B cell (primary cell): ENCODE measurements at regions of chr10 and their contacts with region 1.

Region 1: GRCh38 chr10:96395931-96396877 is 37.4 kb upstream of the OPALIN start:
- DNase-seq: peak; percentile 78
- ATAC-seq: peak; percentile 76
- H3K4me3 ChIP-seq: no peak overlapping the region
- H3K4me3 Mint-ChIP-seq: no peak overlapping the region
- H3K27ac ChIP-seq: no peak overlapping the region
- H3K27ac Mint-ChIP-seq: no peak overlapping the region
- H3K4me1 ChIP-seq: peaks cover 0 to 7% of the 10 kb centered on the region in 2 donors
- H3K4me1 Mint-ChIP-seq: peaks cover 1% of the 10 kb centered on the region
- H3K27me3 ChIP-seq: peaks cover 0 to 13% (median 5%) of the 10 kb centered on the region in 4 experiments
- H3K27me3 Mint-ChIP-seq: peaks cover 32% of the 10 kb centered on the region
- CTCF ChIP-seq: peak; percentile 91

Region 2: GRCh38 chr10:96374985-96375830 is 21.0 kb before region 1 on chr10:
- CTCF ChIA-PET with region 1: interaction called, 16 read pairs
- POLR2A ChIA-PET with region 1: no interaction called
- intact Hi-C with region 1: no loop called
- DNase-seq: peak; percentile 85
- ATAC-seq: peak; percentile 91
- H3K4me3 ChIP-seq: peak overlapping the region; percentile 8 to 63 (median 42)
- H3K4me3 Mint-ChIP-seq: peak overlapping the region; percentile 86
- H3K27ac ChIP-seq: no peak overlapping the region
- H3K27ac Mint-ChIP-seq: no peak overlapping the region
- H3K4me1 ChIP-seq: peaks cover 6 to 13% of the 10 kb centered on the region in 2 donors
- H3K4me1 Mint-ChIP-seq: peaks cover 15% of the 10 kb centered on the region
- H3K27me3 ChIP-seq: peaks cover 0 to 8% (median 0%) of the 10 kb centered on the region in 4 experiments
- H3K27me3 Mint-ChIP-seq: peaks cover 32% of the 10 kb centered on the region
- CTCF ChIP-seq: peak; percentile 99

Region 3: DNA sequence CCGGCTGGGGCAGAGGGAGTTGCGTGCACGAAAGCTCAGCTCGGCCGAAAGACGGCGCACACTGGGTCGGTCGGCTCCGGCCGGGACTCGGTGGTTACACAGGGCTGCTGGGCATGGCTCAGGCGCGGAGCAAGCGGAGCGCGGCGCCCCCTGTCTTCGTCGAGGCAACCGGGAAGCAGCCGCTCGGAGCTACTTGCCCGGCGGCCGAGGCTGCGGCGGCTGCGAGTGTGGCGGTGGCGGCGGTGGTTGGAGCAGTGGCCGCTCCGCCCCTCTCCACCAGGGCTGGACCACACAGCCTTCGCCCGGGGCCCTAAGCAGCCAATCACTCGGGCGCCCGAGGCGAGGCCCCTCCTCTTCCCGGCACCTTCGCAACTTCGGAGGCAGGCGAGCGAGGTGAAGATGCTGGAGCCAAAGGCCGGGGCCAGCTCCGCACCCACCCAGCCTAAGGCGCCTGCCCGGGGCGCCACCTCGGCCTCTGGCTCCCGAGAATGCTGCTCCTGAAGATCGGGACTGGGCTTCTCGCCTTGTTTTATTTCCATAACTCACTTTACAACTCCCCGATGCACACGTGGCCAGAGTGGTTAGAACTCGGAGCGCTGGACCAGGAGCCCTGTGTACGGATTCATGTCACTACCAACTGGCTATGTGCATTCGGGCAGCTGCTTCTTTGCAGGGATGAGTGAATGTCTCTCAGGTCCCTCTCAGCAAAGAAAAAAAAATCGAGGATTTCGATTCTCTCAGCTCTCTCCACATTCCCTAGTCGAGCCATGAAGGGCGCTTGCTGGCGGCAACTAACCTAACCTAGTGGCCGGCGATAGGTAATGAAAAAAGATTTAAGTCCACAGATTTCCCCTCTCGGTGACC is 117.7 kb after region 1 on chr10 and contains the start of gene TLL2:
- CTCF ChIA-PET with region 1: interaction called, 3 read pairs
- POLR2A ChIA-PET with region 1: no interaction called
- intact Hi-C with region 1: loop called (anchors 5 kb)
- DNase-seq: peak; percentile 80
- ATAC-seq: peak; percentile 85
- H3K4me3 ChIP-seq: peak within 1 kb of the TSS; percentile 11 to 86 (median 62)
- H3K4me3 Mint-ChIP-seq: peak within 1 kb of the TSS; percentile 89
- H3K27ac ChIP-seq: no peak within 1 kb of the TSS
- H3K27ac Mint-ChIP-seq: peak within 1 kb of the TSS; percentile 46
- H3K4me1 ChIP-seq: peaks cover 16 to 19% of the 10 kb centered on the region in 2 donors
- H3K4me1 Mint-ChIP-seq: peaks cover 23% of the 10 kb centered on the region
- H3K27me3 ChIP-seq: peaks cover 2 to 35% (median 9%) of the 10 kb centered on the region in 4 experiments
- H3K27me3 Mint-ChIP-seq: peaks cover 6% of the 10 kb centered on the region
- CTCF ChIP-seq: no peak
- total RNA-seq, gene TLL2: 0.47 and 0.51 TPM in 2 replicates

Region 4: DNA sequence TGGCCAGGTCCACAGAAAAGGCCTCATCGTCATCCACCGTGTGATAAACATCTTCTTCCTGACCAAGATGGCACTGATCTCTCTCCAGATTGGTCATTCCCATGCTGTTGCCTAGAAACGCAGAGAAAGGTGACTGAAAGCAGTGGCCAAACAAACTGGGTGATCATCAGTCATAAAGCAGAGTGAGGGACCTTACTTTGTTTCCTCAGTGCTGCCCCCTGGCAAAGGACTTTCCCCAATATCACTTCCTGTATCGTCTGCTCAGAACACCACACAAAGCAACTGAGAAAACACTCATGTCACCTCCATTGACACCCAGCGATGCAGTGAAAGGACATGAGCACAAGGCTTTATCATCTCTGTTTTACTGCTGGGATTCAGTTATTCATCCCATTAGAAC is 230.6 kb after region 1 on chr10:
- CTCF ChIA-PET with region 1: no interaction called
- POLR2A ChIA-PET with region 1: no interaction called
- intact Hi-C with region 1: loop called (anchors 10 kb)
- DNase-seq: peak; percentile 42
- ATAC-seq: no peak
- H3K4me3 ChIP-seq: no peak overlapping the region
- H3K4me3 Mint-ChIP-seq: no peak overlapping the region
- H3K27ac ChIP-seq: peak overlapping the region in 1 of 2 donors; percentile 36
- H3K27ac Mint-ChIP-seq: peak overlapping the region; percentile 37
- H3K4me1 ChIP-seq: no peaks in the 10 kb centered on the region
- H3K4me1 Mint-ChIP-seq: peaks cover under 1% of the 10 kb centered on the region
- H3K27me3 ChIP-seq: no peaks in the 10 kb centered on the region
- H3K27me3 Mint-ChIP-seq: no peaks in the 10 kb centered on the region
- CTCF ChIP-seq: no peak